ENCODE measurements at regions of chr3 and their contacts with region 1.

Region 1: GRCh38 chr3:141266797-141267555 is 35.4 kb downstream of the PXYLP1 start:
- DNase-seq: peak in 4 of 5 donors; percentile 19 to 74 (median 56)
- H3K4me3 ChIP-seq: peak overlapping the region; percentile 71
- H3K4me3 Mint-ChIP-seq: peak overlapping the region; percentile 88 to 98 (median 90)
- H3K27ac ChIP-seq: peak overlapping the region; percentile 34
- H3K27ac Mint-ChIP-seq: peak overlapping the region; percentile 93 to 98 (median 96)
- H3K4me1 ChIP-seq: peaks cover 30% of the 10 kb centered on the region
- H3K4me1 Mint-ChIP-seq: peaks cover 30 to 41% (median 33%) of the 10 kb centered on the region in 3 donors
- H3K27me3 ChIP-seq: no peaks in the 10 kb centered on the region
- H3K27me3 Mint-ChIP-seq: peaks cover 0 to 1% of the 10 kb centered on the region in 2 donors

Region 2: DNA sequence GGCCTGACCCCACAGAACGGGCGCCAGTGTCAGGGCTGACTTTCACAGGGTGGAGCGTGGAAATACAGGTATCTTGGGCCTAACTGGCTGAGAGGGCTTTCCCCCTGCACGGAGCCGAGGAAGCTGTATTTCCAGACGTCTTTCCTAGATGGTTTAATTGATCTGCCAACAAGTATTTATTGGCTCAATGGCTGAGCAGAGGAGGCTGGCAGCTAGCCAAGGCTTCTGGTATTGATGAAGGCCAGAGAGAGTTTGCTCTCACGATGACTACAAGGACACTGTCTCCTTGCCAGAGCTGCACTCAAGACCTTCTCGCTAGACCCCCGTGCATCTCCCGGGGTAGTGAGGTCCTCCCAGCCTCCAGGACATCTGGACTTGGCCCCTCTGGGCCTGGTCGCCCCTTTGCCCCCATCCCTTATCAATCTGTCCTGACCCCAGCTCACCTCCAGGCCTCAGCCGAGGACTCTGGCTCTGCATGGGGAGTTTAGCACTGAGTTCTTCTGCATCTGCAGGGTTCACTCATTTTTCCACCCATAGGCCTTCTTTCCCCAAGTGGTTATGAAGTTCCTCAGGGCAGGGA is 195.2 kb before region 1 on chr3:
- CTCF ChIA-PET with region 1: no interaction called
- POLR2A ChIA-PET with region 1: no interaction called
- DNase-seq: no peak
- H3K4me3 ChIP-seq: no peak overlapping the region
- H3K4me3 Mint-ChIP-seq: no peak overlapping the region
- H3K27ac ChIP-seq: no peak overlapping the region
- H3K27ac Mint-ChIP-seq: no peak overlapping the region
- H3K4me1 ChIP-seq: no peaks in the 10 kb centered on the region
- H3K4me1 Mint-ChIP-seq: peaks cover 0 to 1% (median 0%) of the 10 kb centered on the region in 3 donors
- H3K27me3 ChIP-seq: no peaks in the 10 kb centered on the region
- H3K27me3 Mint-ChIP-seq: peaks cover 1 to 3% of the 10 kb centered on the region in 2 donors

Region 3: GRCh38 chr3:141255846-141256261 is 11.1 kb before region 1 on chr3:
- CTCF ChIA-PET with region 1: interaction called, 23 read pairs
- POLR2A ChIA-PET with region 1: interaction called, 6 read pairs
- DNase-seq: peak in 3 of 5 donors; percentile 20 to 67 (median 47)
- H3K4me3 ChIP-seq: no peak overlapping the region
- H3K4me3 Mint-ChIP-seq: peak overlapping the region in 2 of 7 donors; percentile 39 to 45
- H3K27ac ChIP-seq: no peak overlapping the region
- H3K27ac Mint-ChIP-seq: peak overlapping the region in 3 of 8 donors; percentile 32 to 61 (median 52)
- H3K4me1 ChIP-seq: peaks cover 14% of the 10 kb centered on the region
- H3K4me1 Mint-ChIP-seq: peaks cover 9 to 16% (median 16%) of the 10 kb centered on the region in 3 donors
- H3K27me3 ChIP-seq: no peaks in the 10 kb centered on the region
- H3K27me3 Mint-ChIP-seq: no peaks in the 10 kb centered on the region

Region 4: GRCh38 chr3:141279077-141279967 is 12.3 kb after region 1 on chr3:
- CTCF ChIA-PET with region 1: interaction called, 22 read pairs
- POLR2A ChIA-PET with region 1: interaction called, 8 read pairs
- DNase-seq: peak in 2 of 5 donors; percentile 18 to 39
- H3K4me3 ChIP-seq: no peak overlapping the region
- H3K4me3 Mint-ChIP-seq: peak overlapping the region in 1 of 7 donors; percentile 66
- H3K27ac ChIP-seq: no peak overlapping the region
- H3K27ac Mint-ChIP-seq: peak overlapping the region in 6 of 8 donors; percentile 8 to 70 (median 60)
- H3K4me1 ChIP-seq: peaks cover 19% of the 10 kb centered on the region
- H3K4me1 Mint-ChIP-seq: peaks cover 20 to 25% (median 21%) of the 10 kb centered on the region in 3 donors
- H3K27me3 ChIP-seq: no peaks in the 10 kb centered on the region
- H3K27me3 Mint-ChIP-seq: no peaks in the 10 kb centered on the region

Region 5: GRCh38 chr3:141311496-141312353 is 44.7 kb after region 1 on chr3:
- CTCF ChIA-PET with region 1: interaction called, 4 read pairs
- POLR2A ChIA-PET with region 1: interaction called, 10 read pairs
- DNase-seq: peak; percentile 96 to 99 (median 98)
- H3K4me3 ChIP-seq: peak overlapping the region; percentile 58
- H3K4me3 Mint-ChIP-seq: peak overlapping the region; percentile 90 to 98 (median 95)
- H3K27ac ChIP-seq: peak overlapping the region; percentile 66
- H3K27ac Mint-ChIP-seq: peak overlapping the region; percentile 82 to 99 (median 97)
- H3K4me1 ChIP-seq: peaks cover 44% of the 10 kb centered on the region
- H3K4me1 Mint-ChIP-seq: peaks cover 44 to 53% (median 48%) of the 10 kb centered on the region in 3 donors
- H3K27me3 ChIP-seq: no peaks in the 10 kb centered on the region
- H3K27me3 Mint-ChIP-seq: peaks cover 0 to 1% of the 10 kb centered on the region in 2 donors